ENCODE measurements at regions of chr1 and their contacts with region 1.

Region 1: DNA sequence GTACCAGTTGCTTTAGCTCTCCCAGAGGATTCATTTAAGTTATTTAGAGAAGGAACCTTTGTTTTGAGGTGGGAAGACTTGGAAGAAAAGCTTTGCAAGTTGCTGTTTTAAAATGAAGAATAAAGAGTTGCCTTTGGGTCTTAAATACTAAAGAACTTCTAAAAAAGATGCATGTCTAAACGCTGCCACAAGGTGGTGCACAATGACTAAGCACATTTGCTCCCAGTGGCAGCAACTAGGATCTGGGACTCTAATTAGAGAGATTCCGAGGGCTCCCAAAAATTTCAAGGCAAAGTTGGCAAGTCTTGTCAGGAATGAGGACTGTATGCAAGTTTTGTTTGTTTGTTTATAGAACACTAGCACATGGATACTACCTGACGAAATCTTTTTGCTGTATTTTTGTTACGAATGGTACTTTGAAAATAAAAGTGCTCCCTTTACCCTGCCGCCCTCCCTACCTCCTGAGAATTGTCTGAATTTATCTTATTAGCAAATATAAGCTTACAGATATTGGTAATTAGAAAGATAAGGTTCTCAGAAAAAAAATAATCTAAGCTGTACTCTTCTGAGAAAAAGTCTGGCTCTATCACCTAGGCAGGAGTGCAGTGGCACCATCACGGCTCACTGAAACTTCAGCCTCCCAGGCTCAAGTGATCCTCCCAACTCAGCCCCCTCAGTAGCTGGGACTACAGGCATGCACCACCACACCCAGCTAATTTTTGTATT is 121.8 kb downstream of the HFM1 start:
- DNase-seq: peak in 1 of 2 donors; percentile 59
- ATAC-seq: peak in 7 of 8 donors; percentile 56 to 75 (median 73)
- H3K4me3 ChIP-seq: peak overlapping the region in 5 of 10 donors; percentile 12 to 30 (median 29)
- H3K27ac ChIP-seq: no peak overlapping the region
- H3K4me1 ChIP-seq: peaks cover 0 to 9% (median 0%) of the 10 kb centered on the region in 9 donors
- H3K27me3 ChIP-seq: no peaks in the 10 kb centered on the region
- CTCF ChIP-seq: peak; percentile 57 to 89 (median 83)

Region 2: GRCh38 chr1:90879281-90879680 is 403.6 kb before region 1 on chr1:
- intact Hi-C with region 1: no loop called
- DNase-seq: no peak
- ATAC-seq: no peak
- H3K4me3 ChIP-seq: no peak overlapping the region
- H3K27ac ChIP-seq: no peak overlapping the region
- H3K4me1 ChIP-seq: no peaks in the 10 kb centered on the region
- H3K27me3 ChIP-seq: no peaks in the 10 kb centered on the region
- CTCF ChIP-seq: no peak

Region 3: GRCh38 chr1:91165033-91165654 is 117.7 kb before region 1 on chr1:
- intact Hi-C with region 1: loop called in 1 of 10 experiments (anchors 10 kb)
- DNase-seq: peak; percentile 66 to 80
- ATAC-seq: peak; percentile 88 to 96 (median 93)
- H3K4me3 ChIP-seq: no peak overlapping the region
- H3K27ac ChIP-seq: no peak overlapping the region
- H3K4me1 ChIP-seq: no peaks in the 10 kb centered on the region
- H3K27me3 ChIP-seq: peaks cover 0 to 6% (median 0%) of the 10 kb centered on the region in 7 donors
- CTCF ChIP-seq: peak; percentile 71 to 96 (median 89)

Region 4: GRCh38 chr1:91404151-91405012 is 121.5 kb after region 1 on chr1 and contains the start of gene HFM1:
- intact Hi-C with region 1: loop called in 9 of 10 experiments (anchors 1 to 5 kb)
- DNase-seq: peak; percentile 83 to 86
- ATAC-seq: peak; percentile 98 to 100 (median 99)
- H3K4me3 ChIP-seq: peak within 1 kb of the TSS; percentile 36 to 78 (median 63)
- H3K27ac ChIP-seq: peak within 1 kb of the TSS; percentile 24 to 95 (median 88)
- H3K4me1 ChIP-seq: peaks cover 0 to 20% (median 13%) of the 10 kb centered on the region in 9 donors
- H3K27me3 ChIP-seq: peaks cover 0 to 36% (median 0%) of the 10 kb centered on the region in 7 donors
- CTCF ChIP-seq: peak in 6 of 9 donors; percentile 12 to 48 (median 26)
- total RNA-seq, gene HFM1: 1.2 to 4.3 (median 2.9) TPM

Region 5: DNA sequence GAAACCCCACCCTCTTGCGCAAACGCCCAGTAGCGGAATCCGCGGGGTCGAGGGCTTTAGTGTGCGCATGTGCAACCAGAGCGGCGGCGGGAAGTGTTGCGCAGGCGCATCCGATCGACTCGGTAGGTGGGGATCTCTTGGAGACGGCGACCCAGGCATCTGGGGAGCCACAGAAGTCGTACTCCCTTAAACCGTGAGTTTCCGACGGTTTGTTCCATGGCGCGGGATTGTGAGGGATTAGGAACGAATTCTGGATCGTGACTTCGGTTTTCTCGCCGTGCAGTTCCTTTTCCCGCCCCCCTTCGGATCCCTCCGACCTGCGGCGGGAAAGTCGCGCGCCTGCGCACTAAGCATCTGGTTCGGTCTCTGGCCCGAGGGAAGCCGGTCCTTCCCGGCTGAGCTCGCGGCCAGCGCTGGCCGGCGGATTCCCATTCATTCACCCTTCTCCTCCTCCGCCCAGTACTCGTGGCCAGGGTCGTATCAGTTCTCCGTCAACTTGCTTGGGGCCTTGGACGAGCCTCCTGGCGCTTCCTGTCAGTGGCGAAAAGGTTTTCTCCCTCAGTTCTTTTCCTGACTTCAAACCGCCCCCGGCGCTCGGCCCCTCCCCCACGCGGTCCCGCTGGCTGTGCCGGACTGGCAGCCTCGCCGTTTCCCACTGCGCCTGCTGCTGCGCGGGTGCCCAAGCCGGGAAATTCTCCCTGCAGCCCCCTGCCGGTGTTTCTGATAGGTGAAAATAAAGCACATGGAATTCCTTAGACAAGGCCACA is 218.1 kb after region 1 on chr1 and contains the start of gene CDC7:
- intact Hi-C with region 1: loop called in 8 of 10 experiments (anchors 5 to 10 kb)
- DNase-seq: peak; percentile 92
- ATAC-seq: peak; percentile 95 to 99 (median 97)
- H3K4me3 ChIP-seq: peak within 1 kb of the TSS; percentile 46 to 75 (median 64)
- H3K27ac ChIP-seq: peak within 1 kb of the TSS; percentile 9 to 92 (median 82)
- H3K4me1 ChIP-seq: peaks cover 0 to 38% (median 15%) of the 10 kb centered on the region in 9 donors
- H3K27me3 ChIP-seq: no peaks in the 10 kb centered on the region
- CTCF ChIP-seq: peak in 8 of 9 donors; percentile 12 to 63 (median 50)
- total RNA-seq, gene CDC7: 0.26 to 4.0 (median 0.73) TPM

Region 6: DNA sequence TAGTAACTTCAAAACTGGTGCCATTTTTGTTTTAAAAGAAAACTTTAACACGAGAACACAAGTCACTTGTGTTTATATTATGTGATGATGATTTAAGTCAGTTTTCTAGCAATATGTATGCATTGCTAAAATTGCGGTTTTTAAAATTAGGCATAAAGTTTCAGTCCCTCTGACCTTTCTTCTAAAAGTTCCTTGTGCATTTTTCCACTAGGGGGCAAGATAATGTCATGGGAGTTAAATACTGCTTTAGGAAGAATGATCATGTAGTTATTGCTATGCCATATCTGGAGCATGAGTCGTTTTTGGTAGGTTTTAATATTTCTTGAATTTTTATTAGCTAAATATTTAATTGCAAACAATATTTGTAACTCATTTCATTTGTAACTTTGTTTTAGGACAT is 228.5 kb after region 1 on chr1:
- intact Hi-C with region 1: loop called in 4 of 10 experiments (anchors 5 to 10 kb)
- DNase-seq: no peak
- ATAC-seq: peak in 2 of 8 donors; percentile 46 to 52
- H3K4me3 ChIP-seq: no peak overlapping the region
- H3K27ac ChIP-seq: no peak overlapping the region
- H3K4me1 ChIP-seq: no peaks in the 10 kb centered on the region
- H3K27me3 ChIP-seq: no peaks in the 10 kb centered on the region
- CTCF ChIP-seq: peak; percentile 29 to 78 (median 67)

Region 7: GRCh38 chr1:91924146-91924545 is 641.3 kb after region 1 on chr1:
- intact Hi-C with region 1: loop called in 8 of 10 experiments (anchors 5 to 10 kb)
- DNase-seq: no peak
- ATAC-seq: peak in 1 of 8 donors; percentile 16
- H3K4me3 ChIP-seq: no peak overlapping the region
- H3K27ac ChIP-seq: peak overlapping the region in 1 of 10 donors; percentile 45
- H3K4me1 ChIP-seq: peaks cover 0 to 8% (median 2%) of the 10 kb centered on the region in 9 donors
- H3K27me3 ChIP-seq: no peaks in the 10 kb centered on the region
- CTCF ChIP-seq: no peak

Region 8: GRCh38 chr1:91929250-91929649 is 646.4 kb after region 1 on chr1:
- intact Hi-C with region 1: loop called in 8 of 10 experiments (anchors 5 to 10 kb)
- DNase-seq: peak in 1 of 2 donors; percentile 23
- ATAC-seq: peak in 2 of 8 donors; percentile 43 to 70
- H3K4me3 ChIP-seq: no peak overlapping the region
- H3K27ac ChIP-seq: no peak overlapping the region
- H3K4me1 ChIP-seq: peaks cover 0 to 8% (median 3%) of the 10 kb centered on the region in 9 donors
- H3K27me3 ChIP-seq: no peaks in the 10 kb centered on the region
- CTCF ChIP-seq: no peak